Naive thymus-derived CD4-positive, alpha-beta T cell (primary cell): ENCODE measurements at regions of chr13 and their contacts with region 1.

Region 1: DNA sequence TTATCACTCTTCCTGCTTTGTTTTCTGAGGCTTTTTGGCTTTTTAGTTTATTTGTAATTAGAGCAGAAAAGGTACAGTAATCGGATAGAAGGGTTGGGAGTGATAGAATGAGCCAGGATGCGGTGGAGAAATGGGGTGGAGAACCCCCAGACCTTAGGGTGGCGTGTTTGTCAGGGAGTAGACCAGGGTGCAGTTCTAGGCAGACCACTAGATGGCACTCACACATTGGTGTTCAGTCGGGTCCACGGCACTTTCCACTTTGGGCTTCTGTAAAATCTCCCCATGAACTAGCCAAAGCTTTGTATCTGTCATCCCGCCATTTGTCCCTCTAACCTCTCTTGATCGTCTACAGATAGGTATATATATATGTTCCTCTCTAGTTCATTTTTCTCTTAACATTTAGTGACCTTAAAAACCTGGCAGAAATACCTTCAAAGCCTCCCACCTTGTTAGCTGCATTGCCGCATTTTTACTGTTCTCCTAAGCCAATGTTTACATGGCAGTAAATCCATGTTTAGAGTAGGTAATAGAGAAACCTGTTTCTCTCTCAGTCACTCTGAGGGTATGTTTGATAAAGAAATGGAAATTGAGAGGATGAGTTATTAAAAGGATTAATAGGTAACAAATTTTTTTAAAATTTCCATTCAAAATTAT is 154.9 kb downstream of the TM9SF2 start:
- DNase-seq: peak; percentile 58 to 84 (median 80)
- ATAC-seq: peak; percentile 89
- H3K4me3 ChIP-seq: peak overlapping the region; percentile 47
- H3K4me3 Mint-ChIP-seq: peak overlapping the region; percentile 73 to 90 (median 81)
- H3K27ac ChIP-seq: peak overlapping the region; percentile 82
- H3K27ac Mint-ChIP-seq: peak overlapping the region; percentile 47 to 98 (median 92)
- H3K4me1 ChIP-seq: peaks cover 39 to 41% of the 10 kb centered on the region in 2 donors
- H3K4me1 Mint-ChIP-seq: peaks cover 14 to 54% (median 45%) of the 10 kb centered on the region in 7 donors
- H3K27me3 ChIP-seq: no peaks in the 10 kb centered on the region
- H3K27me3 Mint-ChIP-seq: peaks cover 0 to 27% (median 0%) of the 10 kb centered on the region in 5 donors

Region 2: DNA sequence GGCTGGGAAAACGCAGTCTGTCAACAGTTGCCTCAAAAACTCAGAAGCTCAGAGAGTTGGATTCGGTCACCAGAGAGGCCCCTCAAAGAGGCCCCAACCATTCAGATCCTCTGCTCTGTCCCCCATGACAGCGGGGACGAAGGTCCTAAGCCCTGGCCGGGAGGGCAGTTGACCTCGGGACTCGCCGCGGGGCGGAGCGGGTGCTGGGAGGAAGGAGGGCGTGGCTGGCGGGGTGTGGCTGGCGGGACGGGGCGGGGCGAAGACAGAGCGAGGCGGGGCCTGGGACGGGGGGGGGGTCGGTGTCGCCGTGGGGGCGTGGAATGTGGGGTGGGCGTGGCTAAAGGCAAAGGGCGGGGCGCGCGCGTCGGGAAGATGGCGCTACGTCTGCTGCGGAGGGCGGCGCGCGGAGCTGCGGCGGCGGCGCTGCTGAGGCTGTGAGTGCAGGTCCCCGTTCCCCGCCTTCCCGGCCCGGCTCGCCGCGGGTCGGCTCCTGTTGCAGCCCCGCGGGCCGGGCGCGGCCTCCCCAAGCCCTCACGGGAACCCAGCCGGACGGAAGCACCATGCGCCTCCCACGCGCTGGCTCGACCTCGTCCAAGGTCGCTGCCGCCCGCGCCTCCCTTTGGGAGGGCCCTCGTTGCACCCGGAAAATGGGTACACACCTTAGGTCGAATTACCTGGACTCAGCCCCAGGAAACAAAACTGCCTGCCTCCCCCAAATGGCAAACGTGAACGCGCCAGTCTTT is 49.7 kb before region 1 on chr13:
- CTCF ChIA-PET with region 1: interaction called, 3 read pairs
- POLR2A ChIA-PET with region 1: interaction called, 21 read pairs
- intact Hi-C with region 1: loop called (anchors 1 to 2 kb)
- DNase-seq: peak; percentile 80 to 95 (median 87)
- ATAC-seq: peak; percentile 97
- H3K4me3 ChIP-seq: peak within 1 kb of the TSS; percentile 76
- H3K4me3 Mint-ChIP-seq: peak within 1 kb of the TSS; percentile 84 to 93 (median 92)
- H3K27ac ChIP-seq: peak within 1 kb of the TSS; percentile 83
- H3K27ac Mint-ChIP-seq: peak within 1 kb of the TSS; percentile 88 to 96 (median 93)
- H3K4me1 ChIP-seq: peaks cover 9 to 17% of the 10 kb centered on the region in 2 donors
- H3K4me1 Mint-ChIP-seq: peaks cover 28 to 69% (median 54%) of the 10 kb centered on the region in 7 donors
- H3K27me3 ChIP-seq: no peaks in the 10 kb centered on the region
- H3K27me3 Mint-ChIP-seq: peaks cover 0 to 11% (median 0%) of the 10 kb centered on the region in 5 donors

Region 3: GRCh38 chr13:99687723-99688397 is 31.6 kb after region 1 on chr13:
- CTCF ChIA-PET with region 1: no interaction called
- POLR2A ChIA-PET with region 1: no interaction called
- intact Hi-C with region 1: no loop called
- DNase-seq: no peak
- ATAC-seq: no peak
- H3K4me3 ChIP-seq: no peak overlapping the region
- H3K4me3 Mint-ChIP-seq: no peak overlapping the region
- H3K27ac ChIP-seq: no peak overlapping the region
- H3K27ac Mint-ChIP-seq: no peak overlapping the region
- H3K4me1 ChIP-seq: no peaks in the 10 kb centered on the region
- H3K4me1 Mint-ChIP-seq: peaks cover 0 to 6% (median 0%) of the 10 kb centered on the region in 7 donors
- H3K27me3 ChIP-seq: no peaks in the 10 kb centered on the region
- H3K27me3 Mint-ChIP-seq: peaks cover 0 to 13% (median 0%) of the 10 kb centered on the region in 5 donors

Region 4: GRCh38 chr13:99900960-99901359 is 244.7 kb after region 1 on chr13:
- CTCF ChIA-PET with region 1: no interaction called
- POLR2A ChIA-PET with region 1: interaction called, 4 read pairs
- intact Hi-C with region 1: loop called in 1 of 2 experiments (anchors 2 kb)
- DNase-seq: no peak
- ATAC-seq: no peak
- H3K4me3 ChIP-seq: no peak overlapping the region
- H3K4me3 Mint-ChIP-seq: no peak overlapping the region
- H3K27ac ChIP-seq: no peak overlapping the region
- H3K27ac Mint-ChIP-seq: no peak overlapping the region
- H3K4me1 ChIP-seq: peaks cover 0 to 7% of the 10 kb centered on the region in 2 donors
- H3K4me1 Mint-ChIP-seq: peaks cover 0 to 9% (median 5%) of the 10 kb centered on the region in 7 donors
- H3K27me3 ChIP-seq: peaks cover 6 to 20% of the 10 kb centered on the region in 2 donors
- H3K27me3 Mint-ChIP-seq: peaks cover 52 to 71% (median 63%) of the 10 kb centered on the region in 5 donors

Region 5: DNA sequence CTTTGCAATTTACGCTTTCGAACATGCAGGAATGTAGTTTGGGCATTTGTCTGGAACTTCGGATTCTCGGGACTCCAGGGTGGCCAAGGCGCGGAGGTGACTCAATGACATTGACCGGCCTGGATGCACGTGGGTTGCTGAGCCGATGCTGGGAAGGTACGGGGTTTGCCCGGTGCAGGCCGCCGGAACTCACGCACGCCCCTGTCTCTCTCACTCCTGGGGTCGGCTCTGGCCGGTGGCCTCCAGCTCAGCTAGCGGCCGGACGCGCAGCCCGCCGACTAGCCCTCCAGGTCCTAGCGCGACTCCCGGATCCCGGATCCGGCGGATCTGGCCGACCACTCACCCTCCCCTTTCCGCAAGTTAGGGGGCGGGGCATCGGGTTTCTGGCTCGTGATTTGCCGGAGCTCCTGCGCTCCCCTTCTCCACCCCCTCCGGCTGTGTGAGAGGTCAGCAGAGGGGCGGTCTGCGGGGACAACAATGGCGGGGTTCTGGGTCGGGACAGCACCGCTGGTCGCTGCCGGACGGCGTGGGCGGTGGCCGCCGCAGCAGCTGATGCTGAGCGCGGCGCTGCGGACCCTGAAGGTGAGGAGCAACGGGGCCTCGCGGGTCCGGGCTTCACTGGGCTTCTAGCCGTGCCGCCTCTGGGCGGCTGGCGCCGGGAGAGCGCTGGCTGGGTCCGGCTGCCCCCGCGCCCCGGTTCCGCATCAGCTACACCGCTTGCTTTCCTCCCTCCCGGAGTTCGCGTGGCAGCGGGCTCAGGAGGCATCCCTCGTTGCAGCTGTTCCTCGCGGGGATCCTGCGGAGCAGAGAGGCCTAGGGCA is 432.6 kb after region 1 on chr13 and contains the start of gene PCCA:
- CTCF ChIA-PET with region 1: interaction called, 3 read pairs
- POLR2A ChIA-PET with region 1: interaction called, 3 read pairs
- intact Hi-C with region 1: loop called (anchors 1 to 2 kb)
- DNase-seq: peak; percentile 43 to 86 (median 51)
- ATAC-seq: peak; percentile 87
- H3K4me3 ChIP-seq: peak within 1 kb of the TSS; percentile 77
- H3K4me3 Mint-ChIP-seq: peak within 1 kb of the TSS; percentile 90 to 99 (median 95)
- H3K27ac ChIP-seq: peak within 1 kb of the TSS; percentile 58
- H3K27ac Mint-ChIP-seq: peak within 1 kb of the TSS; percentile 44 to 96 (median 79)
- H3K4me1 ChIP-seq: peaks cover 0 to 19% of the 10 kb centered on the region in 2 donors
- H3K4me1 Mint-ChIP-seq: peaks cover 22 to 41% (median 27%) of the 10 kb centered on the region in 7 donors
- H3K27me3 ChIP-seq: no peaks in the 10 kb centered on the region
- H3K27me3 Mint-ChIP-seq: peaks cover 0 to 5% (median 0%) of the 10 kb centered on the region in 5 donors
- total RNA-seq, gene PCCA: 8.3 to 14.6 (median 12.0) TPM

Region 6: GRCh38 chr13:100588331-100589177 is 932.3 kb after region 1 on chr13 and contains the start of gene GGACT:
- CTCF ChIA-PET with region 1: interaction called, 8 read pairs
- POLR2A ChIA-PET with region 1: interaction called, 12 read pairs
- intact Hi-C with region 1: loop called (anchors 1 to 2 kb)
- DNase-seq: peak; percentile 75 to 90 (median 87)
- ATAC-seq: peak; percentile 97
- H3K4me3 ChIP-seq: peak within 1 kb of the TSS; percentile 78
- H3K4me3 Mint-ChIP-seq: peak within 1 kb of the TSS; percentile 82 to 92 (median 85)
- H3K27ac ChIP-seq: peak within 1 kb of the TSS; percentile 79
- H3K27ac Mint-ChIP-seq: peak within 1 kb of the TSS; percentile 81 to 95 (median 92)
- H3K4me1 ChIP-seq: peaks cover 7 to 42% of the 10 kb centered on the region in 2 donors
- H3K4me1 Mint-ChIP-seq: peaks cover 28 to 60% (median 50%) of the 10 kb centered on the region in 7 donors
- H3K27me3 ChIP-seq: no peaks in the 10 kb centered on the region
- H3K27me3 Mint-ChIP-seq: no peaks in the 10 kb centered on the region
- total RNA-seq, gene GGACT: 5.3 to 8.7 (median 7.4) TPM

Region 7: DNA sequence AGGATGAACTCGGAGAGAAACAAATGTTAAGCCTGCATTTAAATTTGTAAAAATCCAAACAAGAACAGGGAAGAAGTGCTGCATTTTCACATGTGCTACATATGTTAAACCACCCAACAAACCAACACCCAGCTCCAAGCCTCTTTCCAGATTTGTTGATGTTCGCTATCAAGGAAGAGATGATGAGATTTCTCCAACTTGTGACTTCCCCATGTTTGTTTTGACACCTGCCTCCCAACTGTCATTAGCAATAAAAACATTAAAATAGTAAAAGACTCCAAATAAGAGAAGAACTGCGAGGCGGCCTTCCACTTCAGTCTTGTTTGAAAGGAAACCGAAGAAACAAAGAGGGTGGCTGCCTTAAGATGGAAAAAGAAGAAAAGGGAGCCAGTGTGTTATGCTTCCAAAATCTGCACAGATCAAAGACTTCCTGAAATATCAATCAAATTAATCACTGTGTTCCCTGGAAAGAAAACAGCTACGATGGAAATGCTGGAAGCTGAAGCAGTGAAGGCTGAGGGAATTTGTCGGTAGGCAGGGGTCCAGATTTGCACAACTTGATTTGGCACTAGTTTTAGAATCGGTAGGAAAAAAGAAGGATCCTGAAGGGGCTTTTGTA is 946.4 kb after region 1 on chr13:
- CTCF ChIA-PET with region 1: no interaction called
- POLR2A ChIA-PET with region 1: no interaction called
- intact Hi-C with region 1: no loop called
- DNase-seq: no peak
- ATAC-seq: no peak
- H3K4me3 ChIP-seq: no peak overlapping the region
- H3K4me3 Mint-ChIP-seq: no peak overlapping the region
- H3K27ac ChIP-seq: no peak overlapping the region
- H3K27ac Mint-ChIP-seq: peak overlapping the region in 3 of 9 donors; percentile 4 to 33 (median 6)
- H3K4me1 ChIP-seq: no peaks in the 10 kb centered on the region
- H3K4me1 Mint-ChIP-seq: peaks cover 0 to 2% (median 0%) of the 10 kb centered on the region in 7 donors
- H3K27me3 ChIP-seq: no peaks in the 10 kb centered on the region
- H3K27me3 Mint-ChIP-seq: no peaks in the 10 kb centered on the region

Region 8: DNA sequence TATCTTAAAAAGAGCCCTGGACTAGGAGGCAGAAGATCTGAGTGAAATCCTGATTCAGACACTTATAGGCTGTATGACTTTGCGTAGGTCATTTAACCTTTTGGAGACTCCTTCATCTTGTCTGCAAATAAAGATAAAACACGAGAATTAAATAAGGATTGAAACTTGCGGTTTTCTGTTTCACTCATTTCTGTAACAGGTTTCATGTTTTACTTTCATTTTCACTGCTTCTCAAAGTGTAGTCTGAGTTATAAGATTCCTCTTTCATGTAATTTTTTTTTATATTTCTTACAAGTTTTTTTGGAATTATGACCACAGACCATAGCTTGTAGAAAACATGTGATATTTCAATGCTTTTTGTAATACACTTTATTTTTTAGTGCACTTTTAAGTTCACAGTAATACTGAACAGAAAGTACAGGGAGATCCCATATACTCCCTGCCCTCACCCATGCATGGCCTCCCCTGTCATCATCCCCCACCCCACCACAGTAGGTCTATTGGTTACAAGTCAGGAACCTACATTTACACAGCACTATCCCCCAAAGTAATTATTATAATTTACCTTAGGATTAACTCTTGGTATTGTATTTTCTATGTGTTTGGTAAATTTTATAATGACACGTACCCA is 1970.8 kb after region 1 on chr13:
- CTCF ChIA-PET with region 1: no interaction called
- POLR2A ChIA-PET with region 1: no interaction called
- intact Hi-C with region 1: loop called in 1 of 2 experiments (anchors 5 kb)
- DNase-seq: peak in 6 of 9 donors; percentile 24 to 62 (median 48)
- ATAC-seq: peak; percentile 73
- H3K4me3 ChIP-seq: peak overlapping the region; percentile 40
- H3K4me3 Mint-ChIP-seq: peak overlapping the region; percentile 63 to 92 (median 78)
- H3K27ac ChIP-seq: peak overlapping the region; percentile 67
- H3K27ac Mint-ChIP-seq: peak overlapping the region; percentile 15 to 89 (median 76)
- H3K4me1 ChIP-seq: peaks cover 29 to 33% of the 10 kb centered on the region in 2 donors
- H3K4me1 Mint-ChIP-seq: peaks cover 9 to 49% (median 48%) of the 10 kb centered on the region in 7 donors
- H3K27me3 ChIP-seq: no peaks in the 10 kb centered on the region
- H3K27me3 Mint-ChIP-seq: peaks cover 0 to 27% (median 0%) of the 10 kb centered on the region in 5 donors